ENCODE measurements at regions of chr5 and their contacts with region 1.

Region 1: DNA sequence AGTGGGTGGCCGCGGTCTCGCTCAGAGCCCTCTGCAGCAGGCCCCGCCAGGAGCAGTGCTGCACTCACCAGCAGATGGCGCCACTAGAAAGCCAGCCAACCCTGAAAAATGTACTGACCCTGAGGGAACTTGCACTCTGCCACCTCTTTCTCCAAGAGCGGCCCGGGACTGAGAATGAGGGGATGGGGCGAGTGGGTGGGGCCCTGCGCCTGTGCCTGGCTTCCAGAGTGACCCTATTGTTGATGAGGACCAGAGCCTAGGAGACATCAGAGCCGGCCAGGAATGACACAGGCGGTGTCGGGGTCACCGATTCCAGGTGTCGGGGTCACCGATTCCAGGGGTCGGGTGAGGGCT is 2.9 kb upstream of the IL17B start:
- DNase-seq: peak; percentile 63
- H3K4me3 ChIP-seq: no peak overlapping the region
- H3K27ac ChIP-seq: peak overlapping the region; percentile 72 to 74
- H3K4me1 ChIP-seq: no peaks in the 10 kb centered on the region
- H3K27me3 ChIP-seq: no peaks in the 10 kb centered on the region
- CTCF ChIP-seq: peak; percentile 89 to 93 (median 92)
- POLR2A ChIP-seq: no peak

Region 2: DNA sequence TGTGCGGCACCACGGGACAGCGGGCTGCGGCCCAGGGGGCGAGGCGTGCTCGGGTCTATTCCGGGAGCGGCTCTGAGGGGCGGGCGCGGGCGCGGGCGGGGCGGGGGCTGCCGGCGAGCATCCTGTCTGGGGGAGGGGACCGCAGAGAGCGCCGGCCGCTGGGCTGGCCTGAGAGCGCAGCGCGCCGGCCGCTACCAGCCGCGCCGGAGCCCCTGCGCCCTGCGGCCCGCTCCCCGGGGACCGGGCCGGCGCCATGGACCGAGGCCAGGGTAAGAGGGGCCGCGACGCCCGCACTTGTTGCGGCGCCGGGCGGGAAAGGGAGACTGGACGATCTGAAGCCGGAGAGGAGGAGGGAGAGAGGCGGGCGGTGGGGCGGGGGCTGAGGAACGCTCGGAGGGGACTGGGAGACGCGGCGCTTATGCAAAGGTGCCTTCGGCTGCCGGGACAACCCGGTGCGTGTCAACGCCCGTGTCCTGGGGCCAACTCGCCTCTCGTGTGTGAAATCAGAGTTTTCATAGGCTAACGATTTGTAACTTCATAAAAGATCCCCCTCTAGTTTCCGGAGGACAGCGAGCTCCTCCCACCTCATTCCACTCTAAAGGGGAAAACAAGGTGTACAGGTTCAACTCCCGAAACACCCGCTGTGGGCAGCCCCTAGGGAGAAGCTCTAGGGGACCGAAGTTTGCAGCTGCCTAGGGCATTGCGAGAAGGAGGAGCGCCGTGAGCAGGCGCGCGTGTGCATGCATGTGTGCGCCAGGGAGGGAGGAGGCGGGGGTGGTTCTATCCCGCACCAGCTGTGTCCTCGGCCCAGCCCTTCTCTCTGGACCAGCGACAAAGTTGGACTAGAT is 110.0 kb before region 1 on chr5 and contains the start of gene AFAP1L1:
- intact Hi-C with region 1: no loop called
- DNase-seq: peak; percentile 29
- H3K4me3 ChIP-seq: peak within 1 kb of the TSS; percentile 42 to 62
- H3K27ac ChIP-seq: peak within 1 kb of the TSS; percentile 57 to 67
- H3K4me1 ChIP-seq: no peaks in the 10 kb centered on the region
- H3K27me3 ChIP-seq: no peaks in the 10 kb centered on the region
- CTCF ChIP-seq: no peak
- POLR2A ChIP-seq: peak; percentile 12
- total RNA-seq, gene AFAP1L1: 8.4 to 10.3 TPM

Region 3: GRCh38 chr5:149422366-149423048 is 40.5 kb after region 1 on chr5:
- intact Hi-C with region 1: no loop called
- DNase-seq: no peak
- H3K4me3 ChIP-seq: no peak overlapping the region
- H3K27ac ChIP-seq: peak overlapping the region; percentile 35 to 47
- H3K4me1 ChIP-seq: no peaks in the 10 kb centered on the region
- H3K27me3 ChIP-seq: no peaks in the 10 kb centered on the region
- CTCF ChIP-seq: no peak
- POLR2A ChIP-seq: no peak

Region 4: GRCh38 chr5:149434162-149435014 is 52.4 kb after region 1 on chr5:
- intact Hi-C with region 1: loop called (anchors 1 kb)
- DNase-seq: peak; percentile 56
- H3K4me3 ChIP-seq: no peak overlapping the region
- H3K27ac ChIP-seq: no peak overlapping the region
- H3K4me1 ChIP-seq: peaks cover 12% of the 10 kb centered on the region
- H3K27me3 ChIP-seq: no peaks in the 10 kb centered on the region
- CTCF ChIP-seq: peak; percentile 62 to 69 (median 66)
- POLR2A ChIP-seq: no peak

Region 5: DNA sequence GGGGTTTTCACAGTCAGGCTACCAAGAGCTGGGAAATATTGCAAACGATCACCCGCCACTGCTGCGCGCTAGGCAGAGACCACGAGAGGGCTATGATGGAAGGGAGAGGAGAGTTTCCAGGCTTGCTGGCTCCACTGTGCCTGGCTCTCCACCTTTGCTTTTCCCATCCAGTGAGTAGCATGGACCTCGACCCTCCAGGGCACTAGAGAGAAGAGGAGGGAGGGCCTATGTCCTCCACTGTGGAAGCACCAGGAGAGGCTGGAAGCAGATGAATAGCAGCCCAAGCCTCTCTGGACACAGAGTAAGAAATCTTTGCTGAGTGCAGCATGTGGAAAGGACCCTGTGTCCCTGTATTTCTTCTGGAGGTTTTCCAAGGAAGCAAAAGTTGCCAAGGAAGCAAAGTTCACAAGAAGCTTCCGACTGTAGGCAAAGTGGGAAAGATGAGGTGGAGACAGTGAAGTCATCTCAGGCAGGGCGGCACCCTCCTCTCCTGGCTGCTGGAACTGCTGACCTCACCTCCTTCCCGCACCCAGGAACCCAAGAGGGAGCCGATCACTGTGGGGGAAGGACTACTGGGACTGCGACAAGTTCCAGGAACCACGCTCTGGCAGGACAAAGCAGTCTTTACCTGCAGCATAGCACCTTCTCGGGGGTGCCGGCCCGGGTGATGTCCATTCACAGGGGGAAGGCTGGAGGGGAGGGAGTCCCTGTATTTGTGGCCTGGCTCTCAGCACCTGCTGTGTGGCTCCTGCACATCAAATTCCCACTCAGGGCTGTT is 89.6 kb after region 1 on chr5:
- intact Hi-C with region 1: no loop called
- DNase-seq: peak; percentile 53
- H3K4me3 ChIP-seq: no peak overlapping the region
- H3K27ac ChIP-seq: peak overlapping the region; percentile 65
- H3K4me1 ChIP-seq: peaks cover 6% of the 10 kb centered on the region
- H3K27me3 ChIP-seq: no peaks in the 10 kb centered on the region
- CTCF ChIP-seq: no peak
- POLR2A ChIP-seq: no peak

Region 6: DNA sequence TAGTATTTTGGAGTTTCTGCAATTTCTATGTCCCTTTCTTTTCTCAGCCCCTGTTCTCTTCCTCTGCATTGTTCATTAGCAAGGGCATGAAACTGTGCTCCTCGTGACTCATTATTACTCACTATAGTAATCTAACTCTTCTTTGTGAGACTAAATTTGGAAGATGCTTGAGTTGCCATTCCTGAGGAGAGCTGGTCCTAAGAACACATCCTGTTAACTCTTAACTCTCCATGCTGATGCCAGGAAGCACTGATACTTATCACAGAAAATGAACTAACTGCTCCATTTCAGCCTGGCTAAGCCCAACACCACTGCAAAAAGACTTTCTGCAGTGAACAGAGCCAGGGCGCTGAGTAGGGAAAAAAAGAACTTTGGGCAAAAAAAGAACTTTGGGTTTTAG is 179.9 kb after region 1 on chr5:
- intact Hi-C with region 1: loop called (anchors 5 kb)
- DNase-seq: no peak
- H3K4me3 ChIP-seq: no peak overlapping the region
- H3K27ac ChIP-seq: peak overlapping the region; percentile 68 to 71
- H3K4me1 ChIP-seq: peaks cover 2% of the 10 kb centered on the region
- H3K27me3 ChIP-seq: no peaks in the 10 kb centered on the region
- CTCF ChIP-seq: no peak
- POLR2A ChIP-seq: no peak

Region 7: GRCh38 chr5:149656576-149657182 is 274.7 kb after region 1 on chr5:
- intact Hi-C with region 1: no loop called
- DNase-seq: no peak
- H3K4me3 ChIP-seq: no peak overlapping the region
- H3K27ac ChIP-seq: no peak overlapping the region
- H3K4me1 ChIP-seq: no peaks in the 10 kb centered on the region
- H3K27me3 ChIP-seq: no peaks in the 10 kb centered on the region
- CTCF ChIP-seq: peak in 3 of 4 experiments; percentile 30 to 64 (median 53)
- POLR2A ChIP-seq: no peak